ENCODE measurements at regions of chr1 and their contacts with region 1.

Region 1: GRCh38 chr1:33137800-33138199 is 44.0 kb downstream of the TRIM62 start:
- DNase-seq: peak; percentile 72
- ATAC-seq: peak; percentile 37

Region 2: GRCh38 chr1:33219881-33220661 is 82.3 kb after region 1 on chr1:
- intact Hi-C with region 1: no loop called
- DNase-seq: no peak
- ATAC-seq: peak; percentile 17

Region 3: GRCh38 chr1:33244143-33244820 is 106.5 kb after region 1 on chr1:
- intact Hi-C with region 1: no loop called
- DNase-seq: no peak
- ATAC-seq: peak; percentile 24

Region 4: DNA sequence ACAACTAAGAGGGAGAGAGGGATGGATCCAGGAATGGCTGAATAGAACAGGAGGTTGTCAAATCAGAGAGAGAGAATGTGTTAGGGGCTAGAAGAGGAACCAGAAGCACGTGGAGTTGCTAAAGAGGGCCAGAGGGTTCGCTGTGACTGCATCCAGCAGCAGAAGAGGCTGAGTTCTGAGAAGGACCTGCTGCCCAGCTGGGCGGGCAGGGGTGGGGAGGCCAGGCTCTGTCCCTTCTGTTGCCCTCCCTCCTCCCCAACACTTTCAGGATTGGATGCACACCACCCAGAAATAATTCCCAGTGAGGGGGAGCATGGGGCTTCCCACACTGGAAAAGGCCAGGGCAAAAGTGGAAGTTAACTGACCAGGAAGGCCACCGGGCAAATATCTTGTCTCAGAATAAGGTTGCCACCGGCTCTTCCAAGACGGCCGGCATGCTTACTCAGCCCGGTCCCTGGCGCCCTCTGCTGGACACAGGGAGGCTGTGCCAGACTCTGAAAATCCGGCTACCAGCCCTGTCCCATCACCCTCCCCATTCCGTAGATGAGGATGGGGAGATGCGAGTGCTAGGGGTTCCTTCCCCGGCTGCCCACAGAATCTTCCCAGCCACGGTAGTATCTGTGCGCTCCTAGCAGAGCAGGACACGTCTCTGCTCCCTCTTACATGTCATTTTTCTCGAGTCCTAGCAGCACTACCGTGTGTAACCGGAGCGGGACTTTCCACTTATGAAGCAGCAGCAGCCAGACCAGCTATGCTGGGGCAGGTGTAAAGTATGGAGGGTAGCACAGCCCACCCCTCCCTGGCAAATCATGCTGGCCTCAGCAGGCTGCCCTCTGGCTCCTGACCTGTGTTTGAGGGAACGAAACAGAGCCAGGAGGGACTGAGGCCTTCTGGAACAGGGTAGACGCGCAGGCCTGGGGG is 229.9 kb after region 1 on chr1:
- intact Hi-C with region 1: loop called (anchors 10 kb)
- DNase-seq: peak; percentile 93
- ATAC-seq: peak; percentile 63

Region 5: DNA sequence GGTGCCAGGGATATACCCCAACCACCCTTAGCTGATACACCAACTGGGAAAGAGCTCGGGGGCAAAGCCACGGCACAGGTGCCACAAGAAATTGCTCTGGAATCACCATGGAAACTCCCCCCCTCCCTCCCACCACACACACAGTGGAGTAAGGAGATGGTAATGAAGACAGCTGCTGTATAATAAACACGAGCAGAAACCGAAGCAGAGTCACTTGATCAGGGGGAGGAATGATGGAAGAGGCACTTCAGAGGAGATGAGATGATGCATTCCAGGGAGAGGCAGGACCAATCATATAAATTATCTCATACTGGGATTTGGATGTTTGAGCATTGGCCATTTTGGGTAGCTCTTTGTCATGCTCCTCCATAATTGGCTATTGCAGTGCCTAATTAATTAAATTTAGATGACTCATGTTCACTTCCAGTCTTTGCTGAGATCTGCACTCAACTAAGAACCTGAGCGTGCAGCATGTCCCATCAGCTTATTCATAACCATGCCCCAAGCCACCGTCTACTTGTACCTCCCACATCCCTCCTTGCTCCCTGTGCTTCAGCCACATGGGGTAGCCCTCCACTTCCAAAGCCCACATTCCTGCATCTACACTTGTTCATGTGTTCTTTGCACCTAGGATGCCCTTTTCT is 524.1 kb after region 1 on chr1:
- intact Hi-C with region 1: no loop called
- DNase-seq: no peak
- ATAC-seq: no peak

Measured in left ventricle myocardium superior (tissue), 1 donor.